CD14-positive monocyte (primary cell): ENCODE measurements at regions of chr10 and their contacts with region 1.

Region 1: DNA sequence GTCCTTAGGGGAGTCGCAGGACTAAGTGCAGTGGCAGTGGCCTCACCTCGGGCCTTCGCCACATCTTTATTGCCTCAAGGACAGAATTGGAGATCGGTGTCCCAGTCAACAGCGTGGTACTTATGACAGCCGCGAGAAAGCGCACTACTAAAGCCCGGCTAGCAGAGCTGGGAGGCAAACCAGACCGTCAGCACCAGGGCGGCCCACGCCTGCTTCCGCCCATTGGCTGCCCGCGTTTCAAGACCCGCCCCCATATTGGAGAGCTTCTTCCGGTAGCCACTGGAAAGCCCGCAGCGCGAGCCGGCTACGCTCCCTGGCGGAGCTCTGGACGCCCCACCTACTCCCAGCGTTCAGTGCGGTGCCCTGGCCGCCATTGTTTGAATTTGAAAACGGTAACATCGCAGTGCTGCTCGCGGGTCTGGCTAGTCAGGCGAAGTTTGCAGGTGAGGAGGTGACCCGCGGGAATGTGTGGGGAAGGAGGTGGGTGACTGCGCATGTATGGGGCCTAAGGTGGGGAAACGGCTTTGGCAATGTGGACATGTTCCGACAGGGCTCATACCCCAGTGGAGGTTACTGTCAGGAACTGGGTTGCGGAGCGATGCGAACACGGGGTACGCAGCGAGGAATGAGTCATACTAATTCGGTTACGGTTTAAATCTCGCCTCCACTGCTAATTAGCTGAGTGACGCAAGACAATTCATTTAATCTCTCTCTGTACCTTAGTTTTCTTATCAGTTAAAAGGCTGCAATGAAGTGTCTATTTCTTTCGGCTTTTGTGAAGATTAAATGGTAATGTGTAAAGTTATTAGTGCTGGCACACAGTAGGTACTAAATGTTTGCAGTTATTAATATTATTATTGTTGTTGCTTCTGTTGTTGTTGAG is at the start of gene KIF20B:
- DNase-seq: peak; percentile 94 to 96 (median 95)
- H3K4me3 ChIP-seq: peak within 1 kb of the TSS; percentile 84 to 93 (median 86)
- H3K4me3 Mint-ChIP-seq: peak within 1 kb of the TSS; percentile 97 to 99
- H3K27ac ChIP-seq: peak within 1 kb of the TSS; percentile 86 to 98
- H3K27ac Mint-ChIP-seq: peak within 1 kb of the TSS; percentile 97 to 99 (median 98)
- H3K4me1 ChIP-seq: peaks cover 6 to 20% of the 10 kb centered on the region in 2 donors
- H3K4me1 Mint-ChIP-seq: peaks cover 23% of the 10 kb centered on the region
- H3K27me3 ChIP-seq: no peaks in the 10 kb centered on the region
- H3K27me3 Mint-ChIP-seq: peaks cover 0 to 1% (median 0%) of the 10 kb centered on the region in 3 donors
- CTCF ChIP-seq: peak; percentile 26
- polyA plus RNA-seq, gene KIF20B: 0.44 to 3.9 (median 1.5) TPM

Region 2: GRCh38 chr10:89426230-89426868 is 275.1 kb before region 1 on chr10:
- intact Hi-C with region 1: loop called in 1 of 2 experiments (anchors 10 kb)
- DNase-seq: peak; percentile 15 to 38 (median 34)
- H3K4me3 ChIP-seq: no peak overlapping the region
- H3K4me3 Mint-ChIP-seq: no peak overlapping the region
- H3K27ac ChIP-seq: no peak overlapping the region
- H3K27ac Mint-ChIP-seq: no peak overlapping the region
- H3K4me1 ChIP-seq: no peaks in the 10 kb centered on the region
- H3K4me1 Mint-ChIP-seq: no peaks in the 10 kb centered on the region
- H3K27me3 ChIP-seq: no peaks in the 10 kb centered on the region
- H3K27me3 Mint-ChIP-seq: peaks cover 0 to 2% (median 1%) of the 10 kb centered on the region in 3 donors
- CTCF ChIP-seq: peak; percentile 78

Region 3: GRCh38 chr10:89643431-89644331 is 57.8 kb before region 1 on chr10:
- intact Hi-C with region 1: loop called (anchors 5 to 10 kb)
- DNase-seq: peak; percentile 76 to 83 (median 77)
- H3K4me3 ChIP-seq: peak overlapping the region; percentile 65 to 91 (median 84)
- H3K4me3 Mint-ChIP-seq: no peak overlapping the region
- H3K27ac ChIP-seq: peak overlapping the region in 1 of 2 donors; percentile 27
- H3K27ac Mint-ChIP-seq: no peak overlapping the region
- H3K4me1 ChIP-seq: peaks cover 12 to 31% of the 10 kb centered on the region in 2 donors
- H3K4me1 Mint-ChIP-seq: peaks cover 10% of the 10 kb centered on the region
- H3K27me3 ChIP-seq: no peaks in the 10 kb centered on the region
- H3K27me3 Mint-ChIP-seq: peaks cover 2 to 4% (median 2%) of the 10 kb centered on the region in 3 donors
- CTCF ChIP-seq: no peak